Activated naive CD4-positive, alpha-beta T cell treated with anti-CD3 and anti-CD28 coated beads for 36 hours (primary cell): ENCODE measurements at regions of chr14 and their contacts with region 1.

Region 1: DNA sequence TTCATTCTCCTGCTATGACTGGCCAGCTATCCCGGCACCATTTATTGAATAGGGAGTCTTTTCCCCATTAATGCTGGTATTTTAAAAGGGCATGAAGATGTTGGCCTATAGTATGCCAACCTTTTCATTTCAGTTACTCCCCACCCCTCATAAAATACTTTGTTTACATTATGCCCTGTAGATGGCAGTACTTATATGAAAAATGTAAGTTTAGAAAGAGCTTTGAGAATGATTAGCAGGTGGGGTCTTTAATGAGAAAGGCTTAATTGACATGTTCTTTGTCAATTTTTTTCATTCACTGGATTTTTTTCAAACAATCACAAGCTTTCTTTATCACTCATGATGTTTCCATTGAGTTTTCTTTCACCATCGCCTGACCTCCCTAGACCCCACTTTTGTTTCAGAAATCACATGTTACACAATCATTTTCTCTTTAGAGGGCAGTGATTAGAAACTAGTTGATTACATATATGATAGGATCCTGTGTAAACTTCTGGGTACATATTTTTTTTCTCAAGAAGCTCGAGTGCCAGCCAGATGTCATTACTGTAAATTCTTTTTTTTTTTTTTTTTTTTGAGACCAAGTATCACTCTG is 62.6 kb upstream of the PSMA6 start:
- DNase-seq: no peak
- H3K4me3 Mint-ChIP-seq: no peak overlapping the region
- H3K27ac Mint-ChIP-seq: peak overlapping the region; percentile 37
- H3K4me1 Mint-ChIP-seq: peaks cover 23% of the 10 kb centered on the region
- H3K27me3 Mint-ChIP-seq: no peaks in the 10 kb centered on the region

Region 2: DNA sequence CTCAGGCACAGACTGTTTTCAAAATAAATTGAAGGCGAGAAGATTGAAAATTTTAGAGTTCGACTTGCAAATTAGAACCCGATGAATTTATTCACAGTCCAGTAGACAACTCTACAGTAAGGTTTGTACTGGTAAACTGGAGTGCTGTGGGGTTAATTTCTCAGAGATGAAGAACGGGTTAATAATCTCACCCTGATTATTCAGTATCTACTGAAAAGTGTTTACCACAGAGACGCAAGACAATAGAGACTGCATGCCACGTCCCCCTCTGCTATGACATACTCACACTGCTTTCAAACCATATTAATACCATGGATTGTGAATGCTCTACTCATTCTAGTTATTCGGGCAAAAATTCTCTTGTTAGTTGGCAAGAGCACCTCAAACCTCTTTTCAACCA is 551.3 kb before region 1 on chr14:
- CTCF ChIA-PET with region 1: no interaction called
- intact Hi-C with region 1: loop called (anchors 10 kb)
- DNase-seq: no peak
- H3K4me3 Mint-ChIP-seq: no peak overlapping the region
- H3K27ac Mint-ChIP-seq: no peak overlapping the region
- H3K4me1 Mint-ChIP-seq: peaks cover 6% of the 10 kb centered on the region
- H3K27me3 Mint-ChIP-seq: no peaks in the 10 kb centered on the region

Region 3: DNA sequence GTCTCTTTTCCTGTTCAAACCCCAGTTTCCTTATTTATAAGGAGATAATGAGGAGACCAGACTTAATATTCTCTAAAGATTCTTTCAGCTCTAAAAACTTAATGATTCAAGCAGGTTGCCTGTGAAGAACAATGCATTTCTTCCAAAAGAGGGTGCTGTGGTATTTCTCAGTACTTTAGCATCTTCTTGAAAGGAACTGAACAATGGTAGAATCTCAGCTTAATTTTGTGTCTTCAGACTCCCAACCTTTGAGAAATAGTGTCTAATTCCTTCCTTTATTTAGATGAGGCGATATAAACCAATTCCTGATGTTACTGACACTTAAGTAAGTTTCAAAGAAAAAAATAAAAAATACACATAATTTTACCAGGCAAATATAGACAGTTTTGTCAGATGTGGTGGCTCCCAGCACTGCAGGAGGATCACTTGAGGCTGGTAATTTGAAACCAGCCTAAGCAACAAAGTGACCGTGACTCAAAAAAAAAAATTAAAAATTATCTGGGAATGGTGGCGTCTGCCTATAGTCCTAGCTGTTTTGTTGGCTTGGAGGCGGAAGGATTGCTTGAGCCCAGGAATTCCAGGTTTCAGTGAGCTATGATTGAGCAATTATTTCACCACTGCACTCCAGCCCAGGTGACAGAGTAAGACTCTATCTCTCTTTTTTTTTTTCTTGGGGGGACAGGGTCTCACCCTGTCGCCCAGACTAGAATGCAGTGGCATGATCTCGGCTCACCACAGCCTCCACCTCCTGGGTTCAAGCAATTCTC is 14.3 kb before region 1 on chr14:
- CTCF ChIA-PET with region 1: interaction called, 11 read pairs
- intact Hi-C with region 1: no loop called
- DNase-seq: no peak
- H3K4me3 Mint-ChIP-seq: no peak overlapping the region
- H3K27ac Mint-ChIP-seq: no peak overlapping the region
- H3K4me1 Mint-ChIP-seq: peaks cover 7% of the 10 kb centered on the region
- H3K27me3 Mint-ChIP-seq: no peaks in the 10 kb centered on the region

Region 4: DNA sequence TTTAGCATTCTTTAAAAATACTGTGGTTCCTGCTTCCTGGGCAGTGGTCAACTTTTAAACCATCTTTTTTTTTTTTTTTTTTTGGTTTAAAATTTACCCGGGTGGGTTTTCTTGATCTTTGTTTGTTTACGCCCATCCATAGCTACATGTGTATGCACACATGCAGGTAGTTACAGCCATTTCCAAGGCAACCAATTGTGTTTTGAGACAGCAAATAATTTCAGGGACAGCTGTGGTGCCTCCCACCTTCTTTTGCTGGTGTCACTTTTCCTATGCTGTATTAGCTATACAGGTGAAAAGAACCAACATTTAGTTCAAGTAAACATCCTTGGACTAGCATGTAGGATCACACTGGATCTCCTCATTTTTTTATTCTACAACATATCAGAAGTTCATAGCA is 10.6 kb after region 1 on chr14:
- CTCF ChIA-PET with region 1: interaction called, 12 read pairs
- intact Hi-C with region 1: no loop called
- DNase-seq: no peak
- H3K4me3 Mint-ChIP-seq: no peak overlapping the region
- H3K27ac Mint-ChIP-seq: no peak overlapping the region
- H3K4me1 Mint-ChIP-seq: peaks cover 7% of the 10 kb centered on the region
- H3K27me3 Mint-ChIP-seq: no peaks in the 10 kb centered on the region

Region 5: DNA sequence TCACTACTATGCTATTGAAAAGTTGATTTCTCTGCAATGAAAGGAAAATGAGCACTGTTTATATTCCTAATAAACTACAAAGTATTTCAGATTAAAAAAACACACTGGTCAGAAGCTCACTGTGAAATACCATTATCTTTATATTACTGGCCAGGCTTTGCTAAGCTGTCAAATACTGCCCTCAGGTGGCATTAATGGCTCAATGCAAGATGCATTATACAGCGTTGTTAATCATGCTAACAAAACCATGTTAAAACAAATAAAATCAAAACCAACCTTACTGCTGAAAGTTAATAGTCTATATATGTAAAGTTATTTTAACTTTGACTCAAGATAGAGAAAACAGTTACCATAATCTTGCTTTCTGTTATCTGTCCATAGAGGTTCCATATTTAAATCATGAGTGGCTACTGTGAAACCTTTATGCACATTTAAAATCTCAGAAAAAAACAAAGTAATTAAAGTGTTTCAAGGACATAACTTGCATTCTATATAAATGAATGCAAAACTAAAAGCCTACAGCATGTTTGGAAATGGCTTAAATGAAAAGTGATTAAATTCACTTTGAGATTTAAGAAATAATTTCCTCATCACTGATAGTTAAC is 457.8 kb after region 1 on chr14:
- CTCF ChIA-PET with region 1: interaction called, 3 read pairs
- intact Hi-C with region 1: loop called (anchors 1 kb)
- DNase-seq: peak; percentile 63
- H3K4me3 Mint-ChIP-seq: no peak overlapping the region
- H3K27ac Mint-ChIP-seq: no peak overlapping the region
- H3K4me1 Mint-ChIP-seq: peaks cover 16% of the 10 kb centered on the region
- H3K27me3 Mint-ChIP-seq: no peaks in the 10 kb centered on the region

Region 6: DNA sequence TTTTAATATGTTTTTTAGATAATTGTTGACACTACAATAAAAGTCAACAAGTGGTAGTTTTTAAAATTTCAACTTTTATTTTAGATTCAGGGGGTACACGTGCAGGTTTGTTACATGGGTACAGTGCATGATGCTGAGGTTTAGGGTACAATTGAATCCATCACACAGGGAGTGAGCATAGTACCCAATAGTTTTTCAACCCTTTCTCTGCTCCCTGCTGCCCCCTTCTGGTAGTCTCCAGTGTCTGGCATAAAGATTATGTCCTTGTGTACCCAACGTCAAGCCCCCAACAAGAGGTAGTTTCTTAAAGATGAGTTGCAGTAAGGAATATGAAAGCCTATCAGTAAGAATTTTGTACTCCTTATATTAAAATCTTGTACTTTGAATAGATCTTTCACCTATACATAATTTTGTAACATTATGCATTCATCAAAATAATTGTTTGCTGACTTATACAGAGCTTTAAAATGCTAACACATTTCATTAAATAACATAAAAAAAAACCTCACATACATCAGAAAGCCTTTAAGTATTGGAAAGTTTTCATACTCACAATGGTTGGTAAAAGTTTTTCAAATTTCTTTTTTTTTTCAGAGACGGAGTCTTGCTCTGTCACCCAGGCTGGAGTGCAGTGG is 584.9 kb after region 1 on chr14:
- CTCF ChIA-PET with region 1: no interaction called
- intact Hi-C with region 1: loop called (anchors 10 kb)
- DNase-seq: peak; percentile 91
- H3K4me3 Mint-ChIP-seq: no peak overlapping the region
- H3K27ac Mint-ChIP-seq: no peak overlapping the region
- H3K4me1 Mint-ChIP-seq: peaks cover 6% of the 10 kb centered on the region
- H3K27me3 Mint-ChIP-seq: no peaks in the 10 kb centered on the region